ENCODE measurements at regions of chr5 and their contacts with region 1.

Region 1: DNA sequence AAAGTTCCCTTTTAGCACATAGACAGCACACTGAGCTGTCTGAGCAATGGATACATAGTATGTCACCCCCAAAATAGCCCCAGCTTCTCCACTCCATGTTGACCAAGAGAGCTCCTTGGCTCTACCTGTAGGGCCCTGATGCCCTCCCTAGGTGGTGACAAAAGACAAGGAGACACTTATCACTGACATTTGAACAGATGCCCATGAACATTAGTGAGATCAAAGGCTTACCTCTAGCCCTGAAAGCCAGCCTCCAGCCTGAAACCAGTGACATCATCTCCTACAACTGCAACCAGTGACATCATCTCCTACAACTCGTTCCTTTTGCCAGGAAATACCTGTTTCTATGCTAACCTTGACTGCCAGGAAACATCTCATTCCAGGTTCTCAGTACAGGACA is 122.7 kb downstream of the FSTL4 start:
- DNase-seq: peak; percentile 32
- H3K4me3 Mint-ChIP-seq: no peak overlapping the region
- H3K27ac Mint-ChIP-seq: no peak overlapping the region
- H3K4me1 Mint-ChIP-seq: no peaks in the 10 kb centered on the region
- H3K27me3 Mint-ChIP-seq: peaks cover 67% of the 10 kb centered on the region
- CTCF ChIP-seq: no peak

Region 2: GRCh38 chr5:132886064-132886823 is 603.4 kb before region 1 on chr5:
- CTCF ChIA-PET with region 1: no interaction called
- intact Hi-C with region 1: no loop called
- DNase-seq: no peak
- H3K4me3 Mint-ChIP-seq: no peak overlapping the region
- H3K27ac Mint-ChIP-seq: no peak overlapping the region
- H3K4me1 Mint-ChIP-seq: no peaks in the 10 kb centered on the region
- H3K27me3 Mint-ChIP-seq: no peaks in the 10 kb centered on the region
- CTCF ChIP-seq: no peak

Region 3: DNA sequence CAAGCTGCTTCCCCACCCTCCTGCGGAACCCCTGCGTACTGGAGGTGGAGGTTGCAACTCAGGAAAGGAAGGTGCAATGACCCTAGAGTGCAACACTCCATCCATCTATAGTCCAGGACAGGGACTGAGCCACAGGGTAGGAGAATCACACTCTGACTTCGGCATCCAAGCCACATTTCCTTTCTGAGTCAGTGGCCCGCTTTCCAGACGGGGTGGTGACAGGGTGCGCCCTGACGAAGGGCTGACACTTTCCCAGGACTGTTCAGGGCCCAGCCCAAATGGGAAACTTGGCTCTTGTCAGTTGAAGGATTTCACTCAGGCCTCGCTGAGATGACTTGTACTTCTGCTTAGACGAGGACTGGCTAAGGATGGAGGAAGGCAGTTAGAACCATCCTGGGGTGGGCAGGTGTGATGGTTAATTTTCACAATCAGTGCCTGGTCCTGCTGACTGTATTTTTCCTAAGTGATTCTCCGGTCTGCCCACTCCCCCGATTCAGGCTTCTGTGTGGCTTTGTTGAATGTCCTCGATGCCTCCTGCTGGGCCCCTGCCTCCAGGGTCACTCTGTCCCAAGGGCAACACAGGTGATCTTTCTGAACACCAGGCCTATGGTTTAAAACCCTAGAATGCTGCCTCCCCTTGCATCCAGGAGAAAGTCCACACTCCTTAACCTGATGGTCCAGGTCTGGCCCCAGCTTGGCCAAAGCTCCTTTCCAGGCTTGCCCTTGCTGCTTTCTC is 105.3 kb before region 1 on chr5:
- CTCF ChIA-PET with region 1: no interaction called
- intact Hi-C with region 1: no loop called
- DNase-seq: no peak
- H3K4me3 Mint-ChIP-seq: no peak overlapping the region
- H3K27ac Mint-ChIP-seq: no peak overlapping the region
- H3K4me1 Mint-ChIP-seq: no peaks in the 10 kb centered on the region
- H3K27me3 Mint-ChIP-seq: peaks cover 99% of the 10 kb centered on the region
- CTCF ChIP-seq: no peak

Region 4: DNA sequence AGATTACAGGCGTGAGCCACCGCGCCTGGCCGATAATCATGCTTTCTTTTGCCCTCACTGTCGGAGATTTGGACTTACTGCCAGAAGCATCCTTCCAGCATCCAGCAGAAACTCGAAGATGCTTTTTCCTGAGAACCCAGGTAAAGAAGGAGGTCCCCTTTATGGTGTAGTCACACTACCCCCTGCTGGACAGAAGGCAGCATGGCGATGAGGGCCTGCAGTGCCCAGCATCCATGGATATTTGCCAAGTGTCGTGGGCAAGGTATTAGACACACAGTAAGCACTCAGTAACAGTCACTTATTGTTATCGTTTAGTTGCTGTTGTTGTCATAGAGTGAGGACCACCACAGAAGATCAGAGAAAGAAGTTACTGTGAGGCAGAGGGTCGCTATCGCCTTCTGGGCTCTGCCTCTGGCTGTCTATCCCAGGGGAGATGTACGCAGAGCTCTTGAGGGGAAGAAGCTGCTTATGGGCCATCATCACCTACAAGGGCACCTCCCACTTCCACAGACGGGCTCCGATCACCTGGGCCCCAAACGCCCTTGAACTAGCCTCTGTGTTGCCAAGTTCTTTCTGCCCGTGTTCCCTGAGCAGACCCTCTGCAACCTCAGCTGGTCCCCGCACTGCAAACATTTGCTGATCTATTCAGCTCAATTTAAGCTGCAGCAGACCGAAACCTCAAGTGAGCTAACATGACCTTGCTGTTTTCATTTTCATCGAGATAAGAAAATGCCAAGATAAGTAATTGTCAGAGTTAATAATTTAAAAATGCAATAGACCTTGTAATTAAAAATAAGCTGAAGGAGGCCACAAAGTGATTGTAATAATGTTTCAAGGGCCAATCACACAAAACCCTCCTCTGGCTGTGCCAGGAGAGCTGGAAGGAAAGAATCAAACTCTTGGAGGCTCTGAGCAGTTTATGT is 454.9 kb after region 1 on chr5:
- CTCF ChIA-PET with region 1: interaction called, 3 read pairs
- intact Hi-C with region 1: loop called (anchors 5 kb)
- DNase-seq: peak; percentile 81
- H3K4me3 Mint-ChIP-seq: no peak overlapping the region
- H3K27ac Mint-ChIP-seq: no peak overlapping the region
- H3K4me1 Mint-ChIP-seq: peaks cover 12% of the 10 kb centered on the region
- H3K27me3 Mint-ChIP-seq: peaks cover 27% of the 10 kb centered on the region
- CTCF ChIP-seq: peak; percentile 78